Right ventricle myocardium superior (tissue), 1 donor: ENCODE measurements at regions of chr15 and their contacts with region 1.

Region 1: DNA sequence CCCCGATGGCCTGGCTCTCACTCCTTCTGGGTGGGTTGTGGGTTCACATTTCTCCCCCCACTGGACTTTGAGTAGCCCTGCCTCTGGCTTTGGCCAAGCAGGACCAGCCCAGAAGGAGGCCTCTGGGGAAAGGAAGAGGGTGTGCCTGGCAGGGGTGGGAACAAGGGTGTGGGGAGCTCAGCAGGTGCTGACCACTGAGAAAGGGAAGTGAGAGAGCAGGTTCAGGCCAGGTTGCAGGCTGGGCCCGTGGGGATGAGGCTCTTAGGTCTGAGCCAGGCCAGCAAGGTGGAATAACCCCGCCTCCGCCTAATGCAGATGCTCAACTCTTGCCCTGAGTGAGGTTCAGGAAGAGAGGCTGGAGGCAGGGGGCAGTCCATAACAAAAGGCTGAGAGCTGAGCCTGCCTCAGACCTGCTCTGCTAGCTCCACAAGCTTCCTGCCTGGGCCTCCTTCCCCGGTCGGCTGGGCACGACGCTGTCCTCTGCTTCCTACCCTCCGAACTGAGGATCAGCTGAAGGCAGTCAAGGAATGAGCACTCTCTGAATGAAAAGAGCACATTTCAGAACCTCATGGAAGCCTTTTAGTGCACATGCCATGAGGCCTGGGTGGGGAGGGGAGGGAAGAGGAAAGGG is 82.7 kb downstream of the TLE3 start:
- DNase-seq: no peak
- ATAC-seq: no peak

Region 2: GRCh38 chr15:69853581-69853980 is 161.4 kb before region 1 on chr15:
- intact Hi-C with region 1: no loop called
- DNase-seq: no peak
- ATAC-seq: no peak

Region 3: GRCh38 chr15:70036585-70037291 is 21.8 kb after region 1 on chr15:
- intact Hi-C with region 1: loop called (anchors 2 kb)
- DNase-seq: no peak
- ATAC-seq: no peak